ENCODE measurements at regions of chr12 and their contacts with region 1.

Region 1: GRCh38 chr12:131621701-131622421 is 89.0 kb upstream of the SFSWAP start:
- DNase-seq: no peak
- ATAC-seq: peak in 4 of 8 donors; percentile 17 to 39 (median 24)
- H3K4me3 ChIP-seq: no peak overlapping the region
- H3K27ac ChIP-seq: no peak overlapping the region
- H3K4me1 ChIP-seq: peaks cover 0 to 16% (median 7%) of the 10 kb centered on the region in 9 donors
- H3K27me3 ChIP-seq: peaks cover 0 to 70% (median 54%) of the 10 kb centered on the region in 7 donors
- CTCF ChIP-seq: no peak

Region 2: DNA sequence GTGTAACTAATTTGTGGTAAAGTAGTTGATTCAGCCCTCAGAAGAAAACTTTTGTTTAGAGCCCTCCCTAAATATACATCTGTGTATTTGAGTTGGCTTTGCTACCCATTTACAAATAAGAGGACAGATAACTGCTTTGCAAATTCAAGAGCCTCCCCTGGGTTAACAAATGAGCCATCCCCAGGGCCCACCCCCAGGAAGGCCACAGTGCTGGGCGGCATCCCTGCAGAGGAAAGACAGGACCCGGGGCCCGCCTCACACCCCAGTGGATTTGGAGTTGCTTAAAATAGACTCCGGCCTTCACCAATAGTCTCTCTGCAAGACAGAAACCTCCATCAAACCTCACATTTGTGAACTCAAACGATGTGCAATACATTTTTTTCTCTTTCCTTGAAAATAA is 1456.9 kb before region 1 on chr12:
- intact Hi-C with region 1: loop called in 1 of 10 experiments (anchors 5 kb)
- DNase-seq: no peak
- ATAC-seq: no peak
- H3K4me3 ChIP-seq: no peak overlapping the region
- H3K27ac ChIP-seq: no peak overlapping the region
- H3K4me1 ChIP-seq: peaks cover 0 to 27% (median 14%) of the 10 kb centered on the region in 9 donors
- H3K27me3 ChIP-seq: peaks cover 37 to 99% (median 90%) of the 10 kb centered on the region in 7 donors
- CTCF ChIP-seq: no peak

Region 3: DNA sequence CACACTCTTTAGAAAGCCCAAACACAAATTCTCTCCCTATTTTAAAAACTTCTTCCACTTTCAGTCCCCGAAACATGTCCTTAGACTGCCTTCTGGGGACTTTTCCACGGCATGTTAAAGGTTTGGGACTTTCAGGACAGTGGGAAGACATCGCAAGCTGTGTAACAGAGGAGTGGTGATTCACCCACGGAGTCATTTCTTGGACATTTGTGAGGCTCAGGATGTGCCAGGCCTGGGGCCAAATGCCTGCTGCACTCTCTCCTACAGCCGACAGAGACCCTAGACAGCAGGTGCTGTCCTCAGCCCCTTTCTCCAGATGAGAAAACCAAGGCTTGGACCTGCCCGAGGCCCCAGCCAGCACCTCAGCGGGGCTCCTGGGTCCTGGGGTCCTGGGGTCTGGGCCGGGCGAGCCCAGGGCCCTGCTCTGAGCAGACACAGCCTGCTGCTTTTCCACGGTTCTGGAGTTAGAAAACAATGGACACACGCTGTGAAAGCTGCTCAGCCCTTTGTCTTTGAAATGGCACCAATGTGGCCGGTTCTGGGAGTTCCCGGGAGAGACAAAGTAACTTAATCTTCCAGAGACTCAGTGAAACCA is 281.1 kb before region 1 on chr12:
- intact Hi-C with region 1: loop called in 5 of 10 experiments (anchors 2 to 5 kb)
- DNase-seq: no peak
- ATAC-seq: no peak
- H3K4me3 ChIP-seq: no peak overlapping the region
- H3K27ac ChIP-seq: no peak overlapping the region
- H3K4me1 ChIP-seq: no peaks in the 10 kb centered on the region
- H3K27me3 ChIP-seq: peaks cover 0 to 7% (median 0%) of the 10 kb centered on the region in 7 donors
- CTCF ChIP-seq: no peak

Region 4: GRCh38 chr12:131345521-131346436 is 276.1 kb before region 1 on chr12:
- intact Hi-C with region 1: loop called in 5 of 10 experiments (anchors 2 to 5 kb)
- DNase-seq: no peak
- ATAC-seq: peak in 5 of 8 donors; percentile 22 to 61 (median 31)
- H3K4me3 ChIP-seq: no peak overlapping the region
- H3K27ac ChIP-seq: no peak overlapping the region
- H3K4me1 ChIP-seq: no peaks in the 10 kb centered on the region
- H3K27me3 ChIP-seq: peaks cover 0 to 20% (median 11%) of the 10 kb centered on the region in 7 donors
- CTCF ChIP-seq: no peak

Region 5: GRCh38 chr12:131499160-131499863 is 122.5 kb before region 1 on chr12:
- intact Hi-C with region 1: no loop called
- DNase-seq: no peak
- ATAC-seq: peak in 6 of 8 donors; percentile 52 to 89 (median 74)
- H3K4me3 ChIP-seq: no peak overlapping the region
- H3K27ac ChIP-seq: no peak overlapping the region
- H3K4me1 ChIP-seq: no peaks in the 10 kb centered on the region
- H3K27me3 ChIP-seq: peaks cover 0 to 17% (median 0%) of the 10 kb centered on the region in 7 donors
- CTCF ChIP-seq: no peak

Measured in heart right ventricle (tissue), 16 donors.